ENCODE measurements at regions of chr20 and their contacts with region 1.

Region 1: DNA sequence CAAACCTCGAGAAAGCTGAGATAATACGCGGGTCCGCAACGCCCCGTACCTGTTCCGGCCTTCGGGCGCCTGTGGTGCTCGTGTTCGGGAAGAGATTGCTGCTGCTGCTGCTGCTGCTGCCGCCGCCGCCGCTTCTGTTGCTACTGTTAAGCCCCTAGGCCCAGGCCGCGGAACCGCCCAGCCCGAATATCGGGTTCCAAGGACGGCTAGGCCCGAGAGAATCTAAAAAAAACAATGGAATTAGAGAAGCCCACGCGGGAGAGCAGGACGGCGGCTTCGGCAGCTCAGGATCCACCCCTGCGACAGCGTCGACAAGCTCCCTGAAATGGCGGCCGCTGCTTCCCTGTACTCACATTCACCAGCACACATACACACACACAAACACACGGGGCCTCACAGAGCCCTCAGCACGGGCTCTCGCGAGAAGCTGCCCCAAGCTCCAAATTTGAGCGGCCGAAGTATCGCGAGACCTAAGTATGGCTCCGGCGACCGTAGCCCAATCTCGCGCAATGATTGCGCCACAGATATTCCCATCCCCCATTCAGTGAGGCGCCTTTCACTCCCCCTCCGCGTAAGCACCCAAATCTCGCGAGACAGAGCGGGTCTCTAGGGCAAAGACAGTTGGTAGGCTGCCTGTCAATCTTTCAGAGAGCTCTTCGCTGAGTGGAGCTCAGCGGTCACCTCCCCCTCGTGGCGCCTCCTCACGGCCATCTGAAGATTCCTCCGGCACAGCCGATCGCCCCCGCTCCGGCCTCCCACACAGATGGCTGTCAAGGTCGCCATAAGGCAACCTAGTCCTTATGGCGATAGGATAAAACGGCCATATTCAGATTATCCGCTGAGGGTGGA is at the start of gene RBM39:
- DNase-seq: peak; percentile 99 to 100 (median 100)
- H3K4me3 ChIP-seq: peak within 1 kb of the TSS; percentile 78 to 99
- H3K4me3 Mint-ChIP-seq: peak within 1 kb of the TSS; percentile 98 to 100 (median 99)
- H3K27ac ChIP-seq: peak within 1 kb of the TSS; percentile 100
- H3K27ac Mint-ChIP-seq: peak within 1 kb of the TSS; percentile 98 to 100 (median 100)
- H3K4me1 ChIP-seq: peaks cover 58% of the 10 kb centered on the region
- H3K4me1 Mint-ChIP-seq: peaks cover 29 to 60% (median 40%) of the 10 kb centered on the region in 4 donors
- H3K27me3 ChIP-seq: no peaks in the 10 kb centered on the region
- H3K27me3 Mint-ChIP-seq: peaks cover 0 to 3% of the 10 kb centered on the region in 2 donors
- total RNA-seq, gene RBM39: 631 to 665 TPM

Region 2: GRCh38 chr20:35454881-35455609 is 287.1 kb before region 1 on chr20 and contains the start of gene CEP250:
- CTCF ChIA-PET with region 1: no interaction called
- POLR2A ChIA-PET with region 1: interaction called, 23 read pairs
- intact Hi-C with region 1: no loop called
- DNase-seq: peak; percentile 94 to 96 (median 96)
- H3K4me3 ChIP-seq: peak within 1 kb of the TSS; percentile 80 to 82
- H3K4me3 Mint-ChIP-seq: peak within 1 kb of the TSS; percentile 92 to 99 (median 97)
- H3K27ac ChIP-seq: peak within 1 kb of the TSS; percentile 95
- H3K27ac Mint-ChIP-seq: peak within 1 kb of the TSS; percentile 95 to 99 (median 98)
- H3K4me1 ChIP-seq: no peaks in the 10 kb centered on the region
- H3K4me1 Mint-ChIP-seq: peaks cover 7 to 29% (median 19%) of the 10 kb centered on the region in 4 donors
- H3K27me3 ChIP-seq: no peaks in the 10 kb centered on the region
- H3K27me3 Mint-ChIP-seq: no peaks in the 10 kb centered on the region
- total RNA-seq, gene CEP250: 71.3 to 76.9 TPM

Region 3: GRCh38 chr20:35601008-35601973 is 140.8 kb before region 1 on chr20:
- CTCF ChIA-PET with region 1: interaction called, 7 read pairs
- POLR2A ChIA-PET with region 1: interaction called, 5 read pairs
- intact Hi-C with region 1: loop called (anchors 1 kb)
- DNase-seq: peak; percentile 78 to 83 (median 79)
- H3K4me3 ChIP-seq: peak overlapping the region; percentile 29 to 50
- H3K4me3 Mint-ChIP-seq: peak overlapping the region; percentile 77 to 85 (median 80)
- H3K27ac ChIP-seq: no peak overlapping the region
- H3K27ac Mint-ChIP-seq: peak overlapping the region in 6 of 7 donors; percentile 22 to 81 (median 52)
- H3K4me1 ChIP-seq: peaks cover 17% of the 10 kb centered on the region
- H3K4me1 Mint-ChIP-seq: peaks cover 2 to 15% (median 4%) of the 10 kb centered on the region in 4 donors
- H3K27me3 ChIP-seq: no peaks in the 10 kb centered on the region
- H3K27me3 Mint-ChIP-seq: peaks cover 2 to 6% of the 10 kb centered on the region in 2 donors

Region 4: GRCh38 chr20:35711588-35712209 is 30.4 kb before region 1 on chr20:
- CTCF ChIA-PET with region 1: no interaction called
- POLR2A ChIA-PET with region 1: interaction called, 13 read pairs
- intact Hi-C with region 1: no loop called
- DNase-seq: no peak
- H3K4me3 ChIP-seq: no peak overlapping the region
- H3K4me3 Mint-ChIP-seq: peak overlapping the region; percentile 52 to 75 (median 60)
- H3K27ac ChIP-seq: peak overlapping the region; percentile 22
- H3K27ac Mint-ChIP-seq: peak overlapping the region; percentile 48 to 87 (median 85)
- H3K4me1 ChIP-seq: peaks cover 65% of the 10 kb centered on the region
- H3K4me1 Mint-ChIP-seq: peaks cover 33 to 75% (median 47%) of the 10 kb centered on the region in 4 donors
- H3K27me3 ChIP-seq: no peaks in the 10 kb centered on the region
- H3K27me3 Mint-ChIP-seq: no peaks in the 10 kb centered on the region

Region 5: GRCh38 chr20:35771689-35772562 is 29.8 kb after region 1 on chr20 and contains the start of gene PHF20:
- CTCF ChIA-PET with region 1: interaction called, 63 read pairs
- POLR2A ChIA-PET with region 1: interaction called, 1,007 read pairs
- intact Hi-C with region 1: loop called (anchors 1 kb)
- DNase-seq: peak; percentile 99 to 100 (median 99)
- H3K4me3 ChIP-seq: peak within 1 kb of the TSS; percentile 49 to 79
- H3K4me3 Mint-ChIP-seq: peak within 1 kb of the TSS; percentile 87 to 93 (median 91)
- H3K27ac ChIP-seq: peak within 1 kb of the TSS; percentile 94
- H3K27ac Mint-ChIP-seq: peak within 1 kb of the TSS; percentile 96 to 100 (median 100)
- H3K4me1 ChIP-seq: peaks cover 89% of the 10 kb centered on the region
- H3K4me1 Mint-ChIP-seq: peaks cover 57 to 93% (median 72%) of the 10 kb centered on the region in 4 donors
- H3K27me3 ChIP-seq: no peaks in the 10 kb centered on the region
- H3K27me3 Mint-ChIP-seq: no peaks in the 10 kb centered on the region
- total RNA-seq, gene PHF20: 72.9 to 82.3 TPM

Region 6: DNA sequence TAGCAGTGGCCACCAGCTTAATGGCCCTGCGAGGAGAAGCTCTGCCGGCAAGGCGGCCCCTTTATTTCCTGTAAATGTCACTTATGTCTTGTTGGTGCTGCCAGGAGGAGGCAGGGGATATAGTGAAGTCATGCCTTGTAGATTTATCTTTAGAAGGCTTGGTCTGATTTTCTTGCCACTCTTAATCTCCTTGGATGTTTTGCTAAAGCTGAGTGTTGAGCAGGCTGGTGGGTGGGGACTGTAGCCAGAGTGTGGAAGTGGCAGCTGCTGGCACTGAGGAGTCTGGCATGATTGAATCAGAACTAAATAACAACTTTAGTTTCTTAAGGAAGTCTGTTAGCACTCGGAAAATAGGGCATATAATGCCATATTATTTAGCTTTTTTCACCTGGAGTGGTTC is 107.6 kb after region 1 on chr20:
- CTCF ChIA-PET with region 1: no interaction called
- POLR2A ChIA-PET with region 1: interaction called, 49 read pairs
- intact Hi-C with region 1: no loop called
- DNase-seq: no peak
- H3K4me3 ChIP-seq: no peak overlapping the region
- H3K4me3 Mint-ChIP-seq: no peak overlapping the region
- H3K27ac ChIP-seq: no peak overlapping the region
- H3K27ac Mint-ChIP-seq: peak overlapping the region; percentile 16 to 75 (median 53)
- H3K4me1 ChIP-seq: peaks cover 6% of the 10 kb centered on the region
- H3K4me1 Mint-ChIP-seq: peaks cover 22 to 29% (median 26%) of the 10 kb centered on the region in 4 donors
- H3K27me3 ChIP-seq: no peaks in the 10 kb centered on the region
- H3K27me3 Mint-ChIP-seq: no peaks in the 10 kb centered on the region

Measured in CD4-positive, alpha-beta memory T cell (primary cell).